ENCODE measurements at regions of chr16 and their contacts with region 1.

Region 1: DNA sequence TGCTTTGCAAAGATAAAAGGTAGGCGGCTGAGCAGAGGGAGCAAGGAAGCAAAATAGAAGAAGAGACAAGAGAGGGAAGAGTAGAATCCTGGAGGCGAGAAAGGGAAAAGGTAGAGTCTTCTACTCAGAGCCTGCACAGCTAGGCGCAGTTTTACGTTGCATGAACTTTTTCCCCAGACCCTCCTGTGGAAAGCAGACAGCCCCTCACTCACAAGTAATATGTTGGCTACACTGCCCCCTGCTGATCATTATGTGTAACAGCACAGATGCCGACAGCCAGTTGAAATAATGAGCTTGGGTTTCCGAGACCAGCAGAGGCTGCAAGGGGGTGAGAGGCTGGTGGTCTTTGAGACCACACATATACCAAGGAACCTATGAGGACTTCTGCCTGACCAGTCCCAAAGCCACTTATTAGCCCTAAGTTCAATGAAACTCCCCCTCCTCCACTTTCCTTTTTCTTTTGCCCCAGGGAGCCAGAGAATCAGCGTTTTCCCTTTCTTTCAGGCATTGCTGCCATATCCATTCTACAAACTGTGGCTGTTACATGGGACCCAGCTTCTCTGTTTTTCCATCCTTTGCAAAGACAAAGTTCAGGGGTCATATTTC is 22.5 kb upstream of the CMTR2 start:
- DNase-seq: peak; percentile 41
- CTCF ChIP-seq: peak; percentile 86

Region 2: DNA sequence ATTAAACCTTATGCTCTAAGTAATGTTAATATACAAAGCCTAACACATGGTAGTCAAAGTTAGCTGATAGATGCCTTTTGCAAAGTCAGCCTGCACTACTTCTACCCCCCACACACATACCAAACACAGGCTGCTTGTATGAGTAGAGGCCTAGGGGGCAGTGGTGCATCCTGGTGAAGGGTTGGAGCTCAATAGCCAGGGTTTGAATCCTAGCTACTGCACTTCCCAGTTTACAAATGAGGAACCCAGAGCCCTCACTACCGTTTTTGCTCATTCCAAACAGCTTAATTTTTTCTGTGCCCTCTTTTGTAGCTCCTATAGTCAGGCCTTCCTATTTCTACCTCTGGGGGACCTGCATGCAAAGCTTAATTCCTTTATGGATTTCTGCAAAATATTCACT is 62.3 kb before region 1 on chr16:
- CTCF ChIA-PET with region 1: interaction called, 16 read pairs
- POLR2A ChIA-PET with region 1: no interaction called
- DNase-seq: no peak
- CTCF ChIP-seq: no peak

Region 3: GRCh38 chr16:71297341-71297634 is 14.4 kb before region 1 on chr16:
- CTCF ChIA-PET with region 1: interaction called, 34 read pairs
- POLR2A ChIA-PET with region 1: no interaction called
- DNase-seq: no peak
- CTCF ChIP-seq: no peak

Region 4: DNA sequence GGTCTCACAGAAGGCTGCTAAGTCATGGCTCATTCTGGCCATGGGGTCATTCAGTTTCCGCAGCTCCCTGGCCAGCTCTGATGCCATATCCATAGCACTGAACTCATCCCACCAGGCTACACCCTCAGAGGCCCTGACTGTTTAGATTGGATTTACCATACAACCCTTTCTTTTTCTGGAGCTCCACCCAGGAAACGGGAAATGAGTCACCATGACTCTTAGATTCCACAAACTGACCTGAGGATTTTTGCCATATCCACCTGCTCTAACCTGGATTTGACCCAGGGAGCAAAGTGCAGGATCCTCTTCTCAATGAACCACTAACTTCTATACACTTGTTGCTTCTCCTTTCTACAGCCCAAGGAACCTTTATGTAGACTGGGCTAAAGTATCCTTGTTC is 26.5 kb after region 1 on chr16:
- CTCF ChIA-PET with region 1: interaction called, 16 read pairs
- POLR2A ChIA-PET with region 1: no interaction called
- DNase-seq: no peak
- CTCF ChIP-seq: no peak

Region 5: GRCh38 chr16:71358464-71358998 is 46.9 kb after region 1 on chr16 and contains the start of gene CALB2:
- CTCF ChIA-PET with region 1: interaction called, 20 read pairs
- POLR2A ChIA-PET with region 1: no interaction called
- DNase-seq: peak; percentile 85
- CTCF ChIP-seq: peak; percentile 98